ENCODE measurements at regions of chr1 and their contacts with region 1.

Region 1: DNA sequence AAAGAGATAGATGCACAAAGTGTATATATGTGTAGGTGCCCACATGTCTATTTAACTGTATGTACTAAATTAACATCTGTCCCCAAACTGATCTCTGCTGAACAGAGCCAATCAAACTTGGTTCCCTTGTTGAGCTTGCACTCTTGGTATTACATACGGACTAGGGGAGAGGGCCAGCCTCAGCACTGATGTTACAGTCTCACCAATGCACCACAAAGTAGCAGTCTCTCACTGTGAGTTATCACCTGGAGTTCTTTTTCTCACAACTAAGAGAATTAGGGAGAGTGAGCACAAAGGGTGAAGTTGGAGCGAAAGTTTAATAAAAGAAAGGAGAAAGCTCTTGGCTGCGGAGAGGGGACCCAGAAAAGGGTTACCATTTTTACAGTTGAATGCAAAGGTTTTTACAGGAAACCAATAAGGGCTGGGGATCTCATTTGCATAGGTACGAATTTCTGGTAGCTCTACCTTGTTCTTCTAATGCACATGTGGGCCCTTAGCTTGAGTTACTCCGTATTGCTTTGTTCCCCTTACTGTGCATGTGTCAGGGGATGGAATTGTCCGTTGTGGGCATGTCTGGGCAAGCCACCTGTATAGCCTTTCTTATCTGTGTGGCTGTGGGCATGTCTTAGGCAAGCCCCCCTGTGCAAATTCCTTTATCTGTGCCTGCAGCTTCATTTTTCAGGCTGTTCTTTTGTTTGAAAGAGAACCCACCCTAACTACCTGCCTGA is 13.3 kb upstream of the CHI3L2 start:
- DNase-seq: peak; percentile 76
- H3K4me3 Mint-ChIP-seq: peak overlapping the region; percentile 84
- H3K27ac Mint-ChIP-seq: peak overlapping the region; percentile 92
- H3K4me1 Mint-ChIP-seq: peaks cover 69% of the 10 kb centered on the region
- H3K27me3 Mint-ChIP-seq: no peaks in the 10 kb centered on the region

Region 2: GRCh38 chr1:111197598-111198284 is 16.5 kb before region 1 on chr1:
- intact Hi-C with region 1: loop called (anchors 1 kb)
- DNase-seq: peak; percentile 87
- H3K4me3 Mint-ChIP-seq: peak overlapping the region; percentile 98
- H3K27ac Mint-ChIP-seq: peak overlapping the region; percentile 98
- H3K4me1 Mint-ChIP-seq: peaks cover 70% of the 10 kb centered on the region
- H3K27me3 Mint-ChIP-seq: no peaks in the 10 kb centered on the region

Region 3: GRCh38 chr1:111203681-111204200 is 10.5 kb before region 1 on chr1:
- intact Hi-C with region 1: loop called (anchors 1 kb)
- DNase-seq: peak; percentile 96
- H3K4me3 Mint-ChIP-seq: peak overlapping the region; percentile 98
- H3K27ac Mint-ChIP-seq: peak overlapping the region; percentile 82
- H3K4me1 Mint-ChIP-seq: peaks cover 55% of the 10 kb centered on the region
- H3K27me3 Mint-ChIP-seq: no peaks in the 10 kb centered on the region

Region 4: DNA sequence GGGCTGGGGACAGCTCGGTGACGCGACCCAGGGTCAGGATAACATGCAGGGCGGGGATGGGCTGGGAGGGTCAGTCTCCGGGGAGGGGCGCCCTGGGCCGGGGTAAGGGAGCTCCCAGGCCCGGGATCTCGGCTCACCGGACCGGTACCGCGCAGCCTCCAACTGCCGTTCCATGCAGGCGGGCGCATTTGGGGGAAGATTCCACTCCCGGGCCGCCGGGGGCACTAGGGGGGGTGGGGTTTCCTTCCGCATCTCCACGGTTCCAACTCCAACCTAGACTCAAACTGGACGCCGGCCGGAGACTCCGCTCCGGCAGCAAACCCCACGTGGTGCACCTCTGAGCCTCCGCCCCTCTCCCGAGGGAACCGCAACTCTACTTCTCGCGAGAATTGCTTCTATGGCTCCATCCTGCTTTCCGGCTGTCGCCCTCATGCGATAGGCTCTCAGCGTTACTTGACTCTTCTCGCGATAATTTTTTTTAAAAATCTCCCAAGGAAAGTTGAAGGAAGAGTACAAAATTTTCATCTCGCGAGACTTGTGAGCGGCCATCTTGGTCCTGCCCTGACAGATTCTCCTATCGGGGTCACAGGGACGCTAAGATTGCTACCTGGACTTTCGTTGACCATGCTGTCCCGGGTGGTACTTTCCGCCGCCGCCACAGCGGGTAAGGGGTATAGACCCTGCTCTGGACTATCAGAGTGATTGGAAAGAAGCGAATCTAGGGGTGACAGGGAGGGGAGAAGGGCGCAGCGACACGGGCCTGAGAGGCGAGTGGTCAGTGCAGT is 234.9 kb after region 1 on chr1 and contains the starts of genes ATP5PB and WDR77:
- intact Hi-C with region 1: loop called (anchors 2 kb)
- DNase-seq: peak; percentile 98
- H3K4me3 Mint-ChIP-seq: peak within 1 kb of the TSS; percentile 100
- H3K27ac Mint-ChIP-seq: peak within 1 kb of the TSS; percentile 98
- H3K4me1 Mint-ChIP-seq: peaks cover 68% of the 10 kb centered on the region
- H3K27me3 Mint-ChIP-seq: no peaks in the 10 kb centered on the region
- total RNA-seq, gene ATP5PB: 308 and 325 TPM in 2 replicates
- total RNA-seq, gene WDR77: 60.9 and 65.0 TPM in 2 replicates